Psoas muscle (tissue), 8 donors: ENCODE measurements at regions of chr1 and their contacts with region 1.

Region 1: GRCh38 chr1:236603991-236604904 is at the start of gene HEATR1:
- DNase-seq: peak; percentile 93 to 96
- ATAC-seq: peak; percentile 97 to 98 (median 98)
- H3K4me3 ChIP-seq: peak within 1 kb of the TSS; percentile 82
- H3K27ac ChIP-seq: peak within 1 kb of the TSS; percentile 89
- H3K4me1 ChIP-seq: peaks cover 14% of the 10 kb centered on the region
- H3K27me3 ChIP-seq: no peaks in the 10 kb centered on the region
- CTCF ChIP-seq: no peak
- total RNA-seq, gene HEATR1: 11.2 to 23.9 (median 17.4) TPM

Region 2: DNA sequence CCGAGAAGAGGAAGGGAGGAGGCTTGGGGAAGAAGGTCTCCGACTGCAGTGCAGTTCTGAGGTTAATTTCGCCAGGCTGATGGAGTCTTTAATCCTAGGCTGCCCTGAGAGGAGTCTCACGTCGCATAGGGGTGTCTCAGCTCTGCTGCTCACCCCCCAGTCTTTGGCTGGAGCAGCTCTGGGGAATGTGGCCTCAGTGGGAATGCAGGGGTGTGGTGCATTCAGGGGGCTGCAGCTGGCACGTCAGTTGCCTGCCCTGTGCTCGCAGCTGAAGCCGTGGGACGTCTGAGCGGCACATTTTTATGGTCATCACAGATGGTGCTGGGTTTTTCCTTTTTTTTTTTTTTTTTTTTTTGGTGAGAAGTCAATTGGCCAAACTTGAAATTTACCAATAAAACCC is 120.3 kb after region 1 on chr1:
- intact Hi-C with region 1: loop called in 1 of 2 experiments (anchors 10 kb)
- DNase-seq: no peak
- ATAC-seq: peak in 2 of 4 donors; percentile 5 to 26
- H3K4me3 ChIP-seq: no peak overlapping the region
- H3K27ac ChIP-seq: peak overlapping the region; percentile 39
- H3K4me1 ChIP-seq: peaks cover 4% of the 10 kb centered on the region
- H3K27me3 ChIP-seq: no peaks in the 10 kb centered on the region
- CTCF ChIP-seq: no peak

Region 3: DNA sequence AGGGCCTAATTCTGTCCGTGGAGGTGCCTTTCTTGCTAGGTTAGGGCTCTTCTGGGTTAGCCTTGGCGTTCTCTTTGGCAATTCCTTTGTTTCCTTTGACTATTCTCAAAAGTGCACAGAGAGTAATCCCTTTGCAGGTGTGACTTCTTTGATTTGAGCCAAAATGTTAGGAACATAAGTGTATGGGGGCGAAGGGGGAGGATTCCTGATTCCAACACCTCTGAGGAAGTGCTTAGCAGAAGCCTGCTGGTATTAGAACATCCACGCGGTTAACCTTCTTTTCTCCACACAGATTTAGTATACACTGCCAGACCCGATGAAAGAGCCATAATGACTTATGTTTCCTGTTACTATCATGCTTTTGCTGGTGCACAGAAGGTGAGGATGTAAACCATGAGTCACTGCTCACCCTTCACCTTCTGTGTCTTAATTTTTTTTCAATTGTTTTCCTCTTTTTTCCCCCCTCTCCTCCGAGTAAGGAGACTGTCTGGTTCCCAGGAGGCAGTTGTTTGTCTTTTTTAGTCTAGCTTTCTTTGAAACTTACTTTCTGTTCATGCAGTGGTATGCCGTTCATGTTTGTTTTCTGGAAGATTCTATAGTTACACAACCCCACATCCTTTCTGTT is 130.0 kb after region 1 on chr1:
- intact Hi-C with region 1: loop called (anchors 5 to 10 kb)
- DNase-seq: no peak
- ATAC-seq: peak in 2 of 4 donors; percentile 5 to 23
- H3K4me3 ChIP-seq: no peak overlapping the region
- H3K27ac ChIP-seq: peak overlapping the region; percentile 12
- H3K4me1 ChIP-seq: no peaks in the 10 kb centered on the region
- H3K27me3 ChIP-seq: no peaks in the 10 kb centered on the region
- CTCF ChIP-seq: no peak

Region 4: DNA sequence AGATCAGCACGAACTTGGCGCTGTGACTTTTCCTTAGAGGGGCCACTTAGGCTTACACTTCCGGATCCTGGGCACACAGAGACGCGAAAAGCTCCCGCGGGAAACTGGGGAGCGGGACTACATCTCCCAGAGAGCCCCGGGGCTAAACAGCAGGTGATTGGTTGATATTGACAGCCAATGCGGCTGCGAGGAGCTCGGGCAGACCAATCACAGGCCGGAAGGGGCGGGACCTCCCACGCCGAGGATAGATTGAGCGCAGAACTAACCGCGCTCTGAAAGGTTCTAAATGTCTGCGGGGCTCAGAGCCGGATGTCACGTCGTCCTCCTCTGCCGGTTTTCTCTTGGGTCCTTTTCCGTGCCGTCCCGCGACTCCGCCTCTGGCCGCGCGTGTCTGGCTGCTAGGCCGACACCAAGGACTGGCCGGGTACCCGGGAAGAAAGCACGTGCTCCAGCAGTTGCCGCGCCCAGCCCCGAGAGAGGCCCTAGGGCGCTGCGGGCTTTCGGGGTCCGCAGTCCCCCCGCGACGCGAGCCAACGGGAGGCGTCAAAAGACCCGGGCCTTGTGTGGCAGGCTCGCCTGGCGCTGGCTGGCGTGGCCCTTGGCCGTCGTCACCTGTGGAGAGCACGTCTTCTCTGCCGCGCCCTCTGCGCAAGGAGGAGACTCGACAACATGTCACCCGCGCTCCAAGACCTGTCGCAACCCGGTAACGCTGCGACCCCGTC is 190.9 kb after region 1 on chr1 and contains the start of gene MTR:
- intact Hi-C with region 1: loop called in 1 of 2 experiments (anchors 10 kb)
- DNase-seq: peak; percentile 98 to 99
- ATAC-seq: peak; percentile 95 to 99 (median 97)
- H3K4me3 ChIP-seq: peak within 1 kb of the TSS; percentile 71
- H3K27ac ChIP-seq: peak within 1 kb of the TSS; percentile 94
- H3K4me1 ChIP-seq: peaks cover 33% of the 10 kb centered on the region
- H3K27me3 ChIP-seq: no peaks in the 10 kb centered on the region
- CTCF ChIP-seq: no peak
- total RNA-seq, gene MTR: 51.3 to 66.2 (median 53.6) TPM